ENCODE measurements at regions of chr5 and their contacts with region 1.

Region 1: GRCh38 chr5:113507601-113508000 is 5.9 kb upstream of the YTHDC2 start:
- DNase-seq: no peak
- ATAC-seq: peak; percentile 73
- H3K4me3 ChIP-seq: no peak overlapping the region
- H3K27ac ChIP-seq: no peak overlapping the region
- H3K4me1 ChIP-seq: no peaks in the 10 kb centered on the region
- H3K27me3 ChIP-seq: peaks cover 0 to 1% of the 10 kb centered on the region in 2 experiments; a peak in 2 of 4 replicates
- CTCF ChIP-seq: no peak
- EP300 ChIP-seq: no peak
- POLR2A ChIP-seq: no peak
- RAD21 ChIP-seq: no peak

Region 2: GRCh38 chr5:113538313-113538712 is 30.7 kb after region 1 on chr5:
- CTCF ChIA-PET with region 1: no interaction called
- POLR2A ChIA-PET with region 1: no interaction called
- RAD21 ChIA-PET with region 1: no interaction called
- SMC1A ChIA-PET with region 1: no interaction called
- in situ Hi-C with region 1: no loop called
- intact Hi-C with region 1: loop called (anchors 1 kb)
- DNase-seq: no peak
- ATAC-seq: no peak
- H3K4me3 ChIP-seq: no peak overlapping the region
- H3K27ac ChIP-seq: no peak overlapping the region
- H3K4me1 ChIP-seq: no peaks in the 10 kb centered on the region
- H3K27me3 ChIP-seq: no peaks in the 10 kb centered on the region
- CTCF ChIP-seq: no peak
- EP300 ChIP-seq: no peak
- POLR2A ChIP-seq: no peak
- RAD21 ChIP-seq: no peak

Region 3: DNA sequence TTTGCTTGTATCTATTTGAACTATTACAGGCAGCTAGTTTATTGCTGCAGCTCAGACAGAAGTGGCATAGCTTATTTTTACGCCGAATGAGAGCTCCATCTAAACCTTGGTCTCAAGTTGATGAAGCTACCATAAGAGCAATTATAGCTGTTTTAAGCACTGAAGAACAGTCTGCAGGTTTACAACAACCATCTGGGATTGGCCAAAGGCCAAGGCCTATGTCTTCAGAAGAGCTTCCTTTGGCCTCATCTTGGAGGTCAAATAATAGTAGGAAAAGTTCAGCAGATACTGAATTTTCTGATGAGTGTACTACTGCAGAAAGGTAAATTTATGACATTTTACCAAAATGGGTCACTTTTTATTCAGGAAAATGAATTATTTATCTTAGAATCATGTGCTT is 73.8 kb after region 1 on chr5:
- CTCF ChIA-PET with region 1: no interaction called
- POLR2A ChIA-PET with region 1: no interaction called
- RAD21 ChIA-PET with region 1: no interaction called
- SMC1A ChIA-PET with region 1: no interaction called
- in situ Hi-C with region 1: no loop called
- intact Hi-C with region 1: no loop called
- DNase-seq: no peak
- ATAC-seq: no peak
- H3K4me3 ChIP-seq: no peak overlapping the region
- H3K27ac ChIP-seq: no peak overlapping the region
- H3K4me1 ChIP-seq: no peaks in the 10 kb centered on the region
- H3K27me3 ChIP-seq: no peaks in the 10 kb centered on the region
- CTCF ChIP-seq: no peak
- EP300 ChIP-seq: no peak
- POLR2A ChIP-seq: no peak
- RAD21 ChIP-seq: no peak